CD4-positive, alpha-beta memory T cell (primary cell): ENCODE measurements at regions of chrX and their contacts with region 1.

Region 1: DNA sequence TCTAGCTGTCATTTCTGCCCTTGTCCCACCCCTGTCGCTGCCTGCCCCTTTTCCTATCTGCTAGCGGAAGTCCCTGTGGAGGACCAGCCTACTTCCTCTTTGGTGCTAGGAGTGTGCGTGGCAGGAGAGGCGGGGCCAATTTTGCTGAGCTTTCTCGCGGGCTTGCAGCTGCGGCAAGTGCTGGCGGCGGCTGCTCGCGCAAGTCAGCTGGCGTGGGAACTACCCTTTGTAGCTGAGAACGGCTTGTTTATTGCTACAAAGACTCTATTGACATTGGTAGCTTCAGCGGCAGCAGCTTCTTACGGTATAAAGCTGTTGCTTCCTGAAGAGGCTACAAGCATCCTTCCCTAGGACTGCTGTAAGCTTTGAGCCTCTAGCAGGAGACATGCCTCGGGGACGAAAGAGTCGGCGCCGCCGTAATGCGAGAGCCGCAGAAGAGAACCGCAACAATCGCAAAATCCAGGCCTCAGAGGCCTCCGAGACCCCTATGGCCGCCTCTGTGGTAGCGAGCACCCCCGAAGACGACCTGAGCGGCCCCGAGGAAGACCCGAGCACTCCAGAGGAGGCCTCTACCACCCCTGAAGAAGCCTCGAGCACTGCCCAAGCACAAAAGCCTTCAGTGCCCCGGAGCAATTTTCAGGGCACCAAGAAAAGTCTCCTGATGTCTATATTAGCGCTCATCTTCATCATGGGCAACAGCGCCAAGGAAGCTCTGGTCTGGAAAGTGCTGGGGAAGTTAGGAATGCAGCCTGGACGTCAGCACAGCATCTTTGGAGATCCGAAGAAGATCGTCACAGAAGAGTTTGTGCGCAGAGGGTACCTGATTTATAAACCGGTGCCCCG is at the start of gene MAGEH1:
- DNase-seq: peak; percentile 73 to 89 (median 81)
- H3K4me3 ChIP-seq: peak within 1 kb of the TSS; percentile 61 to 70
- H3K4me3 Mint-ChIP-seq: peak within 1 kb of the TSS; percentile 87 to 97 (median 92)
- H3K27ac ChIP-seq: peak within 1 kb of the TSS; percentile 85
- H3K27ac Mint-ChIP-seq: peak within 1 kb of the TSS; percentile 89 to 97 (median 95)
- H3K4me1 ChIP-seq: peaks cover 7% of the 10 kb centered on the region
- H3K4me1 Mint-ChIP-seq: peaks cover 5 to 30% (median 16%) of the 10 kb centered on the region in 4 donors
- H3K27me3 ChIP-seq: no peaks in the 10 kb centered on the region
- H3K27me3 Mint-ChIP-seq: no peaks in the 10 kb centered on the region
- total RNA-seq, gene MAGEH1: 26.9 to 28.8 TPM

Region 2: DNA sequence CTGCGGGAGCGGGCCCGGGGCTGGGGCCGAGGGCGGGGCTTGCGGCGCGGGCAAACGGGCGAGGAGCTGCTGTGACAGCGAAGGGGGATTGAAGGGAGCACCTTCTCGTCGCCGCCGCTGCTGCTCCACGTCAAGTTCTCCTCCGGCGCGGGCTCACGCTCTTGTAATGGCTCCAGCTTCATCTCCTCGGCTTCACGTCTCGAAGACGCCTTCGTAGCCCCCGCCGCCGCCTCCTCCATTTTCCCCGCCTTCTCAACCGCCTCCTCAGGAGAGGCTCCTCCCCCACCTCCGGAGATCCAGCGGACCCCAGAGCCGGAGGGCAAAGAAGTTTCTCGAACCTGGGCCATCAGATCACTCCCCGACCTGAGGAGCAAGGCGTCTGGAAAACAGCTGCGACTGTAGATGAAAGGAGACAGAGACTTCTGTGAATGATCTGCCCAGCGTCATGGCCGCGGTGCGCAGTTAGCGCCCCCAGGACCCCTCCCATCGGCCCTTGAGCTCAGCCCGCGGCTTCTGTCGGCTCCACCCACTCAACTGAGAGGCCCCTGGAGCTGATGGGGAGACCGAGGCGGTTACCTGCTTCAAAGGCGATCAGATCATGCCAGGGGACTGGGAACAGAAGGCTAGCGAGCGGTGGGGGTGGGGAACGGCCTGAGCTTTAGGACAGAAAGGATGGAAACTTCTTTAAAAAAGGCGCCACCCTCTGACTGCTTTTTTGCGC is 36.5 kb after region 1 on chrX:
- CTCF ChIA-PET with region 1: interaction called, 14 read pairs
- POLR2A ChIA-PET with region 1: interaction called, 50 read pairs
- intact Hi-C with region 1: no loop called
- DNase-seq: peak; percentile 66 to 74 (median 71)
- H3K4me3 ChIP-seq: peak overlapping the region; percentile 52 to 86
- H3K4me3 Mint-ChIP-seq: peak overlapping the region; percentile 93 to 97 (median 94)
- H3K27ac ChIP-seq: peak overlapping the region; percentile 83
- H3K27ac Mint-ChIP-seq: peak overlapping the region; percentile 93 to 98 (median 95)
- H3K4me1 ChIP-seq: peaks cover 10% of the 10 kb centered on the region
- H3K4me1 Mint-ChIP-seq: peaks cover 4 to 18% (median 12%) of the 10 kb centered on the region in 4 donors
- H3K27me3 ChIP-seq: no peaks in the 10 kb centered on the region
- H3K27me3 Mint-ChIP-seq: no peaks in the 10 kb centered on the region

Region 3: DNA sequence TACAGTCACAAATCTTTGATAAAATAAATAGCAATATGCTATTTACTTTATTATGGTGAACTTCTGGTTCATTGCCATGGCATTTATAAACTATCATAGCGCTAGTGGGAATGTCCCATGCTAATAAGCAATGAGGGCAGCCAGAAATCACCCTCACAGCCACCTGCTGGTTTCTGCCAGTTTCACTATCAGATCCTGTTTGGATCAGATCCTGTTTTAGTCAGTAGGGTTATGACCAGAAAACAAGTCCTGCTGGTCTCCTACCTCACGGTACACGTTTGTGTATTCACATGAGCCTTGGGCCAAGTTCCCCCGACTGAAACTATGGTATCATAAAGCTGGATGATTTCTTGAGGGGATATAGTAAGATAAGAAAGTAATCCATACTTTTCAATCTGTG is 188.6 kb after region 1 on chrX:
- CTCF ChIA-PET with region 1: no interaction called
- POLR2A ChIA-PET with region 1: no interaction called
- intact Hi-C with region 1: no loop called
- DNase-seq: no peak
- H3K4me3 ChIP-seq: no peak overlapping the region
- H3K4me3 Mint-ChIP-seq: no peak overlapping the region
- H3K27ac ChIP-seq: no peak overlapping the region
- H3K27ac Mint-ChIP-seq: no peak overlapping the region
- H3K4me1 ChIP-seq: no peaks in the 10 kb centered on the region
- H3K4me1 Mint-ChIP-seq: no peaks in the 10 kb centered on the region
- H3K27me3 ChIP-seq: no peaks in the 10 kb centered on the region
- H3K27me3 Mint-ChIP-seq: peaks cover 3% of the 10 kb centered on the region in 2 donors